IMR-90 (cell line): ENCODE measurements at regions of chr22 and their contacts with region 1.

Region 1: GRCh38 chr22:39765046-39765445 is 128.5 kb downstream of the ENTHD1 start:
- DNase-seq: no peak
- ATAC-seq: no peak
- H3K4me3 ChIP-seq: no peak overlapping the region
- H3K27ac ChIP-seq: no peak overlapping the region
- H3K4me1 ChIP-seq: no peaks in the 10 kb centered on the region
- H3K27me3 ChIP-seq: peaks cover 31% of the 10 kb centered on the region
- CTCF ChIP-seq: no peak
- POLR2A ChIP-seq: no peak
- RAD21 ChIP-seq: no peak

Region 2: DNA sequence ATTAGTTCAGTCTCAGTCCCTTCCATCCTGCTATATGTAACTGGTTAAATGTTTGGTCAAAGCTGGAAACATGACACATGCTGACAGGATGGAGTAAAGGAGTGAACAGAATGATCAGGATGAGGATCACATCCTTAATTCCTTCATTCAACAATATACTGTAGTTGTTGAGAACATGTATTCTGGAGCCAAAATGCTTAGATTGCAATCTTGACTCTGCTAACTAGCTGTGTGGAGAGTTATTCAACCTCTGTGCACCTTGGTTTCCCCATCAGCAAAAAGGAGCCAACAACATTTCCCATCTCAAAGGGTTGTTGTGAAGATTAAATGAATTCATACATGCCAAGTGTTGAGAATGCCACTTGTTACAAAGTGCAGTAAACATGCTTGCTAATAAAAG is 115.7 kb after region 1 on chr22:
- CTCF ChIA-PET with region 1: no interaction called
- POLR2A ChIA-PET with region 1: no interaction called
- dilution Hi-C with region 1: no loop called
- in situ Hi-C with region 1: no loop called
- intact Hi-C with region 1: loop called (anchors 10 kb)
- DNase-seq: no peak
- ATAC-seq: no peak
- H3K4me3 ChIP-seq: no peak overlapping the region
- H3K27ac ChIP-seq: no peak overlapping the region
- H3K4me1 ChIP-seq: no peaks in the 10 kb centered on the region
- H3K27me3 ChIP-seq: peaks cover 20% of the 10 kb centered on the region
- CTCF ChIP-seq: no peak
- POLR2A ChIP-seq: no peak
- RAD21 ChIP-seq: no peak